ENCODE measurements at regions of chr5 and their contacts with region 1.

Region 1: GRCh38 chr5:134845852-134846640 is at the start of gene C5orf24:
- DNase-seq: peak; percentile 95
- ATAC-seq: peak; percentile 95
- H3K4me3 Mint-ChIP-seq: peak within 1 kb of the TSS; percentile 93
- H3K27ac Mint-ChIP-seq: peak within 1 kb of the TSS; percentile 96
- H3K4me1 Mint-ChIP-seq: peaks cover 33% of the 10 kb centered on the region
- H3K27me3 Mint-ChIP-seq: no peaks in the 10 kb centered on the region
- total RNA-seq, gene C5orf24: 25.8 to 30.5 TPM

Region 2: DNA sequence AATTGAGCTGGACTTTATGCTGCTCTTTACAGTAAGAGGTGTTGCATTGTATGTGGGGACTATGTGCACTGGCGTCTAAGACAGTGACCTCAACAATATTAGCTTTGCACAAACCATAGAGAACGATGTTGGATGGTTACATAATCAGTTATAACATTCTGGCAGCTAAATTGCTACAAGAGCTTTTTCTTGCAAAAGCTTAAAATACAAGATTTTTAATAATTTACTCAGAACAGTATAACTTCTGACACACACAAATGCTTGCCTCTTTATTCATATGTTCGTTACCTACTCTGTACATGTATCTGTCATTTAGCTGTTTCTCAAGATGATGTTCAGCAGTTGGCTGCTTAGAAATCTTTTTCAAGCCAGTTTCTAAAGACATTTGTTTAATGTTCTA is 11.4 kb after region 1 on chr5:
- CTCF ChIA-PET with region 1: interaction called, 4 read pairs
- POLR2A ChIA-PET with region 1: interaction called, 11 read pairs
- DNase-seq: no peak
- ATAC-seq: no peak
- H3K4me3 Mint-ChIP-seq: no peak overlapping the region
- H3K27ac Mint-ChIP-seq: no peak overlapping the region
- H3K4me1 Mint-ChIP-seq: peaks cover 22% of the 10 kb centered on the region
- H3K27me3 Mint-ChIP-seq: no peaks in the 10 kb centered on the region

Measured in activated CD8-positive, alpha-beta T cell treated with anti-CD3 and anti-CD28 coated beads, Interleukin-2, amount 10 ng/mL, durations not matched to agents 7 days and 5 days (primary cell).